ENCODE measurements at regions of chr10 and their contacts with region 1.

Region 1: GRCh38 chr10:56135828-56136227 is 225.2 kb downstream of the ZWINT start:
- DNase-seq: no peak
- H3K4me3 Mint-ChIP-seq: no peak overlapping the region
- H3K27ac Mint-ChIP-seq: no peak overlapping the region
- H3K4me1 Mint-ChIP-seq: no peaks in the 10 kb centered on the region
- H3K27me3 Mint-ChIP-seq: no peaks in the 10 kb centered on the region

Region 2: GRCh38 chr10:55989188-55989587 is 146.6 kb before region 1 on chr10:
- intact Hi-C with region 1: no loop called
- DNase-seq: no peak
- H3K4me3 Mint-ChIP-seq: no peak overlapping the region
- H3K27ac Mint-ChIP-seq: no peak overlapping the region
- H3K4me1 Mint-ChIP-seq: no peaks in the 10 kb centered on the region
- H3K27me3 Mint-ChIP-seq: no peaks in the 10 kb centered on the region

Region 3: GRCh38 chr10:56123247-56123646 is 12.6 kb before region 1 on chr10:
- intact Hi-C with region 1: loop called (anchors 1 kb)
- DNase-seq: no peak
- H3K4me3 Mint-ChIP-seq: no peak overlapping the region
- H3K27ac Mint-ChIP-seq: no peak overlapping the region
- H3K4me1 Mint-ChIP-seq: no peaks in the 10 kb centered on the region
- H3K27me3 Mint-ChIP-seq: no peaks in the 10 kb centered on the region